ENCODE measurements at regions of chr3 and their contacts with region 1.

Region 1: DNA sequence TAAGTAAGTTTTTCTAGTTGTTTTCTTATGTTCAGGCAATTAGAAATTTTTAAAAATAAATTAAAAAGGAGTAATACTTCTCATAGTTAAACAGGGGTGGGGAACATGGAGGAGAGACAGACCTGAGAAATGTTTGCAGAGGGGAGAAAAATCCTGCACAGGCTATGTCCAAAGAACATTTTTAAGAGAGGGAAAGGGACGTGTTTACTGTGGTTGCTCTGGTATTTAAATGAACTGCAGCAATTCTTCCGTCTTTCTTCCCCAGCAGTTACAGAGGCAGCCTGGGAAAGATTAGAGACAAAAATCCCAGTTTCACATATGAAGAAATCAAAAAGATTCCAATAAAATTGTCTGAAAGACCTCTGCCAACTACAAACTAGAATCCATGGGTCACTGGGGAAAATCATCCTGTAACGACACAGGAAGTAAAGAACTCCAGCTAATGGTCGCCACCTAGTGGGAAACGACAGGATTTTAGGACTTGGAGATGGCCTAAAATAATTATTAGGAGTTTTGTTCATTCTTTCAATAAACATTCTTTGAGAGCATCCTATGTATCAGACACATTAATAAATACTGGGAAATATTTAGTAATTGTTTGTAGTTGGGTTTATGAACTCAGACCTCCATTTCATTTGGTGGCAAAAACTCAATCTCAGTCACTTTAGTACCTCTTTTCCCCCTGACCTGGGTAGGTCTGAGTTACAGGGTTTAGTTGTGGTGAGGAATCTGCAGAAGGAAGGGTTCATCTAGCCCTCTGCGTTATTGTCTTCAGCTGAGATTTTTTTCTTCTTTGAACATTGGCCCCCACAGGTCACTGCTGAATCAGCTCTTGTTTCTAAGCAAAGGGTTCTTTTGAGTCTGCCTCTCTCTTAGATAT is 69.9 kb upstream of the GOLIM4 start:
- DNase-seq: peak; percentile 68
- H3K4me3 ChIP-seq: no peak overlapping the region
- H3K27ac ChIP-seq: peak overlapping the region in 1 of 4 donors; percentile 4
- H3K4me1 ChIP-seq: peaks cover 0 to 5% (median 4%) of the 10 kb centered on the region in 4 donors
- H3K27me3 ChIP-seq: no peaks in the 10 kb centered on the region
- CTCF ChIP-seq: peak; percentile 70 to 90 (median 79)
- EP300 ChIP-seq: no peak
- POLR2A ChIP-seq: no peak

Region 2: DNA sequence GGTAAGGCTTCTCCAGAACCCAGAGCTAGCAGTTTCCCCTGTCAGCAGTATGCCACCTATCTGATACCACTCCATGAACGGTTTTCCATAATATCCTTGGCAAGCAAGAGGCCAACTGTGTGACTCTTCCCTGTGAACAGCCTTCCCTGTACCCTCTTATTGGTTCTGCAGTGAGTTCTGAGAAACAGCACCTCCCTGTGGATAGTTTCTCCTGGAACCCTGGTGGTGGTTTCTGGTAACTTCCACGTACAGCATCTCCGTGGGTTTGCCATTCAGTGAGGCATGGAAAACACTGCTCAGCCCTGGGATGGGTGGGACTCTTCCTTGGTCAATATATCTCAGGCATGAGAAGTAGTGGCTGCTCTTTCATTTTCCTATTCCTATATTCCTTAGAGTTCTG is 672.4 kb before region 1 on chr3:
- in situ Hi-C with region 1: no loop called
- intact Hi-C with region 1: no loop called
- DNase-seq: no peak
- H3K4me3 ChIP-seq: no peak overlapping the region
- H3K27ac ChIP-seq: no peak overlapping the region
- H3K4me1 ChIP-seq: no peaks in the 10 kb centered on the region
- H3K27me3 ChIP-seq: no peaks in the 10 kb centered on the region
- CTCF ChIP-seq: peak in 1 of 5 experiments; percentile 15
- EP300 ChIP-seq: no peak
- POLR2A ChIP-seq: no peak

Region 3: DNA sequence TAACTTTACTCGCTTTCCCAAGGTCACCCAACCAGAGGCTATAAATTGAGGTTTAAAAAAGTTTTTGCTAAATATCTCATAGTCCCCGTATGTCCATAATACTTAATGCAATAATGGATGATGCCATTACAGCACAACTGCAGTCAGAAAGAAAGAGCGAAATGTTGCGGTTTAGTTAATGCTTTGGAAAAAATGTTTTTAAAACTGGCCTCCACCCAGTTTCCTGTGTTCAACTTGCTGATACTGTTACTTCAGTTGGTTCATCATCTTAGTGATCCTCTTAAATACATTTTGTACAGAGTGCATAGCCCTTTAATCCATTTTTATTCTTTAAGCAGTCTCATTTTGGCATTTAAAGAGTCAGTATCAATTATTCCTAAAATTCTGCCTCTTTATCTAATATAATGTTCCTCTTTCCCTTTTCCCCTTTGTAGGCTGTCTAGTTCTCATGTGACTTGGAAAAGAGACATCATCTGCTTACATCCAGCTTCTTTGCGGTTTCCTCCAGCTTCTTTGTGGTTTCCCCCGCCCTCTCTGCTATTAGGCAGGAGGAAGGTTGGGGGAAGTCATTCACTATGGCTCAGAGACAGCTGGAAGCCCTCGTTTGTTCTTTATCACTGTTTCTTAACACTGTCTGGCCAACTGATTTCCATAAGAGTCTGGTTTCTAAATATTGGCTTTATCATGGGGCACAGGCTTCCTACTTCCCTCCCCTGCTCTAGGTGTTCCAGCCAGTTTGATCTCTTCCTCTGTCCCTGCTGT is 224.2 kb before region 1 on chr3:
- in situ Hi-C with region 1: loop called in 2 of 4 experiments (anchors 25 kb)
- intact Hi-C with region 1: no loop called
- DNase-seq: peak; percentile 25
- H3K4me3 ChIP-seq: no peak overlapping the region
- H3K27ac ChIP-seq: peak overlapping the region in 1 of 4 donors; percentile 35
- H3K4me1 ChIP-seq: no peaks in the 10 kb centered on the region
- H3K27me3 ChIP-seq: no peaks in the 10 kb centered on the region
- CTCF ChIP-seq: no peak
- EP300 ChIP-seq: no peak
- POLR2A ChIP-seq: no peak

Region 4: GRCh38 chr3:167958141-167958540 is 207.5 kb before region 1 on chr3:
- in situ Hi-C with region 1: no loop called
- intact Hi-C with region 1: no loop called
- DNase-seq: no peak
- H3K4me3 ChIP-seq: no peak overlapping the region
- H3K27ac ChIP-seq: no peak overlapping the region
- H3K4me1 ChIP-seq: no peaks in the 10 kb centered on the region
- H3K27me3 ChIP-seq: no peaks in the 10 kb centered on the region
- CTCF ChIP-seq: no peak
- EP300 ChIP-seq: no peak
- POLR2A ChIP-seq: no peak

Region 5: GRCh38 chr3:168040607-168041208 is 124.9 kb before region 1 on chr3:
- in situ Hi-C with region 1: loop called in 3 of 4 experiments (anchors 5 kb)
- intact Hi-C with region 1: no loop called
- DNase-seq: no peak
- H3K4me3 ChIP-seq: no peak overlapping the region
- H3K27ac ChIP-seq: no peak overlapping the region
- H3K4me1 ChIP-seq: no peaks in the 10 kb centered on the region
- H3K27me3 ChIP-seq: no peaks in the 10 kb centered on the region
- CTCF ChIP-seq: peak in 4 of 5 experiments; percentile 46 to 54 (median 52)
- EP300 ChIP-seq: no peak
- POLR2A ChIP-seq: no peak

Region 6: GRCh38 chr3:168047190-168047795 is 118.3 kb before region 1 on chr3:
- in situ Hi-C with region 1: loop called (anchors 5 kb)
- intact Hi-C with region 1: loop called (anchors 2 kb)
- DNase-seq: no peak
- H3K4me3 ChIP-seq: no peak overlapping the region
- H3K27ac ChIP-seq: no peak overlapping the region
- H3K4me1 ChIP-seq: peaks cover 26 to 46% (median 31%) of the 10 kb centered on the region in 4 donors
- H3K27me3 ChIP-seq: no peaks in the 10 kb centered on the region
- CTCF ChIP-seq: peak; percentile 69 to 94 (median 76)
- EP300 ChIP-seq: no peak
- POLR2A ChIP-seq: no peak

Region 7: DNA sequence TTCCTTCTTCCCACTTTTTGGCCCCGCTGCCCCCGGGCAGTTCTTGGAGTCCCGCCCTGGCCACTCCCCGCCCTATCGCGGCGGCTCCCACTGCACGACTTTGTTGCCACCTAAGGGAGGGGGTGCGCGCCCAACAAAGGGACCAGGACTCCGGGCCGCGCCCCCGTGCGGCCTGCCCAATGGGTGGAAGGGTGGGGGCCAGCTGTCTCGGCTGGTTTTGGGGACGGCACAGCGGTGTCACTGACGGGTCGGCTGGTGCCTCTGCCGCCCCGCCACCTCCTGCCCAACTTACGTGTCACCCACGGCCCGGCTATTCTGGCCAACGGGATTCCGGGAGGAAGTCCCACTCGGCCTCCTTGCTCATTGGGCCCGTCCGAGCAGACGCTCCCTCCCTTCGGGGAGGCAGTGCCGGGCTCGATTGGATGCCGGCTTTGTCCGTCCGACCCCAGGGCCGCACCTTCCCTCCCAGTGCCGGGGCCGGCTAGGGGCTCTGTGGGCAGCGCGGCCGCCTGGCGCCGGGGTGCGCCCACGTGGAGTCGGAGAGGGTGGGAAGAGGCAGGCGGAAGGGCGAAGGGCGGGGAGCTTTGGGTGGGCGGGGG is 69.9 kb before region 1 on chr3 and contains the start of gene GOLIM4:
- in situ Hi-C with region 1: no loop called
- intact Hi-C with region 1: loop called (anchors 10 kb)
- DNase-seq: peak; percentile 96
- H3K4me3 ChIP-seq: peak within 1 kb of the TSS; percentile 61 to 85 (median 70)
- H3K27ac ChIP-seq: peak within 1 kb of the TSS; percentile 91 to 99 (median 98)
- H3K4me1 ChIP-seq: peaks cover 14 to 57% (median 30%) of the 10 kb centered on the region in 4 donors
- H3K27me3 ChIP-seq: no peaks in the 10 kb centered on the region
- CTCF ChIP-seq: no peak
- EP300 ChIP-seq: no peak
- POLR2A ChIP-seq: peak; percentile 81
- total RNA-seq, gene GOLIM4: 87.2 to 120 (median 101) TPM

Measured in transverse colon (tissue), 4 donors.